Activated CD4-positive, alpha-beta T cell treated with anti-CD3 and anti-CD28 coated beads, Interleukin-2, amount 10 ng/mL, durations not matched to agents 24 days and 14 days (primary cell): ENCODE measurements at regions of chr2 and their contacts with region 1.

Region 1: DNA sequence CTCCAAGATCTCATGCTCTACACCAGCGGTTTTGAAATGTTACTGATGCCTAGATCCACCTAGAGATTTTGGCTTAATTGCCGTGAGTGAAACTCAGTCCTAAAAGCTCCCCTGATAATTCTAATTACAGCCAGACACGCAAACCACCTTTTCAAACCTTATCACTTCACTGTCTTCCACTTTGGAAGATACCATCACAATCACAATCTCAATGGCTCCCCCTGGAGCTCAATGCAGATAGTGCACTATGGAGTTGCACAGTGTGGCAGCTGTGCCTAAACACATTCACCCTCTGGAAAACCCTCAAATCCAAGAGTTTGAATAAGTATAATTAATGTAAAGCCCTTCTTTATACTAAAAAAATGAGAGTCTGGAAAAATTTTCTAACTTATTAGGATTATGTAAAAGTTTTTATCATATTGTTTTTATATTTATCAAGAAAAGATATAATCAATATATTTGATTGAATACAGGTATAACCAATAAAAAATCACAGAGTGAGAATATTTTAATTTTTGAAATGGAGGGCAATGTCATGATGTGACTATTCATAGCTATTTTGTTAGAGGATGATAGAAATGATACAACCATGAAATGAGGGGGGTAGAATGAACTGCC is 102.9 kb upstream of the SLC8A1 start:
- DNase-seq: peak; percentile 88
- H3K4me3 Mint-ChIP-seq: no peak overlapping the region
- H3K27ac Mint-ChIP-seq: no peak overlapping the region
- H3K4me1 Mint-ChIP-seq: no peaks in the 10 kb centered on the region
- H3K27me3 Mint-ChIP-seq: peaks cover 4% of the 10 kb centered on the region

Region 2: GRCh38 chr2:40244675-40245074 is 310.1 kb before region 1 on chr2:
- intact Hi-C with region 1: loop called (anchors 1 kb)
- DNase-seq: peak; percentile 61
- H3K4me3 Mint-ChIP-seq: no peak overlapping the region
- H3K27ac Mint-ChIP-seq: no peak overlapping the region
- H3K4me1 Mint-ChIP-seq: peaks cover 3% of the 10 kb centered on the region
- H3K27me3 Mint-ChIP-seq: no peaks in the 10 kb centered on the region

Region 3: DNA sequence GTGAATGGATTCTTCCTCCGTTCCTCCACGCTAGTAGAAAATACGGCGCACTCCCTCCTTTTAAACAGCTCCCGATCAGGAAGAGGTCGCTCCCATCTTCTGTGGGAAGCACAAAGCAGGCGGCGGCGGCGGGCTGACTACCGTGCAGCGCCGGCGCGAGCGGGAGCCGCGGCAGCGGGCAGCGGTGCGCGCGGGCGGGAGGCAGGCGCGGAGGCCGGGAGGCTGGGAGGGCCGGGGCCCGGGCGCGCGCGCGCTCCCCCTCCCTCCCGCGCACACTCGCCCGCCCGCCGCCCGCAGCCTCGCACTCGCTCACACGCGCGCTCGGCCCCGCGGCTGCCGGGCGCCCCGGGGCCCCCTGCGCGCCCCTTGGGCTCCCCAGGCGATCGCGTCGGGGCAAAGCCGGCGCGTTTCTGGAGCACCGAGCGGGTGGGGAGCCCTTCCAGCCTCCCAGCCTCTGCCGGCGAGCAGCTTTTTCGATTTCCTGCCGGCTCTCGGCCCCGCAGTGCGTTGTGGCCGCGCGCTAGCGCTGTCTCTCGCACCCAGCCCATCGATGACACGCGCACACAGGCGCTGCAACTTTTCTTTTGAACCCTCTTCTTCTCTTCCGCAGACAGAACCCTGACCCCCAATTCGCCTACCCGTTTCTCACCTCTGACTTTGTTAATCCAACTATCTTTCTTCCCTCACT is 102.7 kb before region 1 on chr2 and contains the start of gene SLC8A1:
- intact Hi-C with region 1: loop called (anchors 2 kb)
- DNase-seq: peak; percentile 72
- H3K4me3 Mint-ChIP-seq: peak within 1 kb of the TSS; percentile 82
- H3K27ac Mint-ChIP-seq: peak within 1 kb of the TSS; percentile 80
- H3K4me1 Mint-ChIP-seq: peaks cover 22% of the 10 kb centered on the region
- H3K27me3 Mint-ChIP-seq: peaks cover 51% of the 10 kb centered on the region
- total RNA-seq, gene SLC8A1: 3.4 and 5.0 TPM in 2 replicates